ENCODE measurements at regions of chr9 and their contacts with region 1.

Region 1: GRCh38 chr9:105309531-105309931 is 65.1 kb downstream of the SLC44A1 start:
- DNase-seq: no peak
- ATAC-seq: no peak
- H3K4me3 Mint-ChIP-seq: no peak overlapping the region
- H3K27ac Mint-ChIP-seq: no peak overlapping the region
- H3K4me1 Mint-ChIP-seq: peaks cover 4% of the 10 kb centered on the region
- H3K27me3 Mint-ChIP-seq: no peaks in the 10 kb centered on the region

Region 2: GRCh38 chr9:105103782-105104181 is 205.7 kb before region 1 on chr9:
- CTCF ChIA-PET with region 1: no interaction called
- POLR2A ChIA-PET with region 1: no interaction called
- intact Hi-C with region 1: no loop called
- DNase-seq: no peak
- ATAC-seq: no peak
- H3K4me3 Mint-ChIP-seq: no peak overlapping the region
- H3K27ac Mint-ChIP-seq: no peak overlapping the region
- H3K4me1 Mint-ChIP-seq: peaks cover 2% of the 10 kb centered on the region
- H3K27me3 Mint-ChIP-seq: no peaks in the 10 kb centered on the region

Region 3: DNA sequence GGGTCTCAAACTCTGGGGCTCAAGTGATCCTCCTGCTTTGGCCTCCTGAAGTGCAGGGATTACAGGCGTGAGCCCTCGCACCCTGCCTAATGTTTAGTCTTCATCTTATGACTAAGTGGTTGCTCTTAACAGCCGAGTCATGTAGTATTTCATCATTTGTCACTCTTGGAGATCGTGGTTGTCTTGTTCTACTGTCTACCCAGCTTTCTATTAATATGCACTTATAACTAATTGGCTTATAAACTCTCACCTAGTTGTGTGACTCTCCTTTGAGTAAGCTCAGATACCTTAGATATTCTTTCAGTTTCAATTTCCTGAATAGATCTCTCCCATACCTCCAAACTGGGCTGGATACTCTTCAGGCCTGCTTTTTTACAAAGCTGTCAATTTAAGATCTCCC is 45.2 kb before region 1 on chr9:
- CTCF ChIA-PET with region 1: interaction called, 3 read pairs
- POLR2A ChIA-PET with region 1: interaction called, 11 read pairs
- intact Hi-C with region 1: no loop called
- DNase-seq: peak; percentile 11
- ATAC-seq: peak; percentile 83
- H3K4me3 Mint-ChIP-seq: no peak overlapping the region
- H3K27ac Mint-ChIP-seq: no peak overlapping the region
- H3K4me1 Mint-ChIP-seq: peaks cover 19% of the 10 kb centered on the region
- H3K27me3 Mint-ChIP-seq: no peaks in the 10 kb centered on the region